Breast epithelium (tissue), 4 donors: ENCODE measurements at regions of chr9 and their contacts with region 1.

Region 1: DNA sequence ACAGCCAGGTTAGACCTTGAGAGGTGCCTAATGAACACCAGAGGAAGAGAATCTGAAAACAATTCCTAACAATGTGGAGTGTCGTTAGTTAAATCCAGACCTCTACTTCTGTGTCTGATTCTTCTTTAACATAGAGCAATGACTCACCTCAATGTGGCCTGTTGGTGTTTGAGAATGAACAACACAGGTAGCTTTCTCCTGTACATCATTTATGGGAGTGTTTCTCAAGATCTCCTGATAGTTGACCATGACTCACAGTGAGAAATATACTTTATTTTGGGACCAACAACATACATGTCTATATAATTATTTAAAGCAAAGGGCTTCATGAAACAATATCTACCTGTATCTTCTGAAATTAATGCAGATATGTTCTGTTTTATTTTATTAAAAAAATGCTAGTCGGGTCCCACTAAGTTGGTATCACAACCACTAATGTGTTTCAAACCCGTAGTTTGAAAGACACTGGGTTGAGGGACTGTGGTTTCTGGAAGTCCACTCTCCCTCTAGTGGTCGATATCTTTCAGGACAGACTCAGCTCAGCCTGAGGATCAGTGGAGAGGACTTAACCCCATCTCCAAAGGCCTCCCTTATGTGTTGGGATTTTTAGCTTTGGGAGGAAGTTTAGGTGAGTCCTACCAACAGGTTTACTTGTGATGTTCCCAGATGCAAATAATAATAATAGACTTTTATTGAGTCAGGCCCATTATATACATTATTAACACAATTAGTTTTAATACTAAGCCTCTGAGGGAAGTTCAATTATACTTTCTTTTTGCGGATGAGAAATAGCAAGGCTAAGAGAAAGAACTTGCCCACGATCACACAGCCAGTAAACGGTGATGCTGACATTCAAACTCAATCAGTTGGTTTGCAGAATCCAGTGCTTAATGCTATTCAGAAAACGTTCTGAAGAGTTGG is 70.0 kb upstream of the KLF9 start:
- DNase-seq: no peak
- H3K4me3 ChIP-seq: no peak overlapping the region
- H3K27ac ChIP-seq: peak overlapping the region; percentile 32 to 98
- H3K4me1 ChIP-seq: peaks cover 7 to 37% of the 10 kb centered on the region in 2 donors
- H3K27me3 ChIP-seq: no peaks in the 10 kb centered on the region
- CTCF ChIP-seq: peak; percentile 79 to 85 (median 81)
- POLR2A ChIP-seq: no peak

Region 2: GRCh38 chr9:69645488-69645887 is 839.0 kb before region 1 on chr9:
- intact Hi-C with region 1: no loop called
- DNase-seq: peak; percentile 68 to 79
- H3K4me3 ChIP-seq: peak overlapping the region in 2 of 3 donors; percentile 31 to 39
- H3K27ac ChIP-seq: peak overlapping the region; percentile 70 to 76
- H3K4me1 ChIP-seq: no peaks in the 10 kb centered on the region
- H3K27me3 ChIP-seq: no peaks in the 10 kb centered on the region
- CTCF ChIP-seq: no peak
- POLR2A ChIP-seq: no peak

Region 3: GRCh38 chr9:70419546-70420266 is 64.8 kb before region 1 on chr9:
- intact Hi-C with region 1: loop called (anchors 5 kb)
- DNase-seq: peak; percentile 97
- H3K4me3 ChIP-seq: peak overlapping the region; percentile 39 to 65 (median 55)
- H3K27ac ChIP-seq: peak overlapping the region; percentile 100
- H3K4me1 ChIP-seq: peaks cover 0 to 19% of the 10 kb centered on the region in 2 donors
- H3K27me3 ChIP-seq: no peaks in the 10 kb centered on the region
- CTCF ChIP-seq: peak in 2 of 3 donors; percentile 10 to 39
- POLR2A ChIP-seq: peak; percentile 60

Region 4: GRCh38 chr9:70525519-70525918 is 41.0 kb after region 1 on chr9:
- intact Hi-C with region 1: no loop called
- DNase-seq: no peak
- H3K4me3 ChIP-seq: no peak overlapping the region
- H3K27ac ChIP-seq: no peak overlapping the region
- H3K4me1 ChIP-seq: no peaks in the 10 kb centered on the region
- H3K27me3 ChIP-seq: no peaks in the 10 kb centered on the region
- CTCF ChIP-seq: no peak
- POLR2A ChIP-seq: no peak